Dendritic cell treated with granulocyte-macrophage colony-stimulating factor and Interleukin-4, amounts not matched to agents 40 ng/mL and 50 ng/mL, for 4 days (primary cell): ENCODE measurements at regions of chrX and their contacts with region 1.

Region 1: DNA sequence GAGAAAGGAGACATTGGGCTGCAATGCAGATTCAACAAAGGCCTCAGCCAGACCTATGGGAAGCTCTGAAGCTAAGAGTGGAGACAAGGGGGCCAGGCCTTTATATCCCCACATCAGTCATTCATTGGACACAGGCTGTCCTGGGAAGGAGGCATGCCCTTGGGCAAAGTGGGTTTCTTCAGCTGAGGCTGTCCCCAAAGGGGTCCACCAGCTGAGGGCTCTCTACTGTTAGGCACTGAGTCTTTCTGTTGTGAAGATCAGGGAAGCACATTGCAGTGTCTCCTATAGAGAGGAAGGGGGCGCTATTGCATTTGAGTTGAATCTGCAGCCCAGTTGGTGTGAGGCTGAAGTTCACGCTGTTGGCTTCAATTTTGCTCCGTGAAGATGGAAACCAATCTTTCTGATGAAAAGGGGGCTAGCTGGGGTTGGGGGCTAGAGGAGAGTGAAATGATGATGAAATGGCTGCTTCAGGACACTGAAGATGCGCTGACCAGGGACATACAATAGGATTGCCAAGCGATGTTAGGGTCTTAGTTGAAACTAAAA is 48.0 kb downstream of the SLC25A5 start:
- H3K4me3 Mint-ChIP-seq: no peak overlapping the region
- H3K27ac Mint-ChIP-seq: no peak overlapping the region
- H3K4me1 Mint-ChIP-seq: peaks cover 5% of the 10 kb centered on the region
- H3K27me3 Mint-ChIP-seq: no peaks in the 10 kb centered on the region

Region 2: GRCh38 chrX:119391279-119391678 is 125.0 kb before region 1 on chrX:
- intact Hi-C with region 1: loop called (anchors 5 kb)
- H3K4me3 Mint-ChIP-seq: no peak overlapping the region
- H3K27ac Mint-ChIP-seq: no peak overlapping the region
- H3K4me1 Mint-ChIP-seq: no peaks in the 10 kb centered on the region
- H3K27me3 Mint-ChIP-seq: no peaks in the 10 kb centered on the region

Region 3: GRCh38 chrX:119729408-119730201 is 213.4 kb after region 1 on chrX:
- intact Hi-C with region 1: loop called (anchors 10 kb)
- H3K4me3 Mint-ChIP-seq: no peak overlapping the region
- H3K27ac Mint-ChIP-seq: no peak overlapping the region
- H3K4me1 Mint-ChIP-seq: peaks cover 2% of the 10 kb centered on the region
- H3K27me3 Mint-ChIP-seq: no peaks in the 10 kb centered on the region